ENCODE measurements at regions of chr13 and their contacts with region 1.

Region 1: DNA sequence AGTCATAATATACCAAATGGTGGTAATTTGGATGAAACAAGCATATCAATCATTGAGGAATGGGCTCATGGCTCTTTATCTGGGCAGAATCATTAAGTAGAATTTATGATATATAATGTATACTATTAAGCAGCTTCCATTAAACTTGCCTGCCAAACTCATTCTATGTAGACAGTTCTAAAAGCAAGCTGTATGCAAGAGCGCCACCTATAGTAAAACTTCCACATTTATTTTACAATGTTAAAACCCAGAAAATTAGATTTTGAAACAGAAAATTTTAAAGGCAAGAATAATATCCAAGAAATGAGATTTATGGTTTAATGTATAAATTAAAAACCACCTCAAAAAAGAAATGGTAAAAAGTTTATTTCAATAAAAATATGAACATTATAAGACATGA is 161.5 kb downstream of the MZT1 start:
- DNase-seq: peak; percentile 15
- ATAC-seq: no peak
- H3K4me3 ChIP-seq: no peak overlapping the region
- H3K27ac ChIP-seq: no peak overlapping the region
- H3K4me1 ChIP-seq: no peaks in the 10 kb centered on the region
- H3K27me3 ChIP-seq: no peaks in the 10 kb centered on the region
- CTCF ChIP-seq: peak; percentile 53
- POLR2A ChIP-seq: no peak
- RAD21 ChIP-seq: peak; percentile 54

Region 2: DNA sequence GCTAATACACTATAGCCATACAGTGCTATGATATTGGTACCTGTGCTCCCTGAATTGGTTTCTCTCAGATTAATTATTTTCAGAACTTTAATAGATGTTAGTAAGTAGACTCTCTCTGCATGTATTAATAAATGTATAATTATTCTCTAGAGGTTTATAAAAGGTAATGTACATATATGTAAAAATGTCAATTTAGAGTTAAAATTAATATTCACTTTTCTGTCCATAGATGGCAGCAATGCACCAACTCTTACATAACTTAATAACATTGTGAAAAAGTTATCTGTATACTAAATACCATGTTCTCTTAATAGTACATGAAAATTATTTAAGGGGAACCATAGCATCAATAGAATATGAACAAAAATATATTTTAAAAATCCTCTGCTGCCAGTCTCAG is 1942.7 kb before region 1 on chr13:
- CTCF ChIA-PET with region 1: no interaction called
- POLR2A ChIA-PET with region 1: no interaction called
- dilution Hi-C with region 1: no loop called
- in situ Hi-C with region 1: no loop called
- intact Hi-C with region 1: loop called (anchors 10 kb)
- DNase-seq: peak; percentile 0
- ATAC-seq: no peak
- H3K4me3 ChIP-seq: no peak overlapping the region
- H3K27ac ChIP-seq: no peak overlapping the region
- H3K4me1 ChIP-seq: no peaks in the 10 kb centered on the region
- H3K27me3 ChIP-seq: no peaks in the 10 kb centered on the region
- CTCF ChIP-seq: peak; percentile 41
- POLR2A ChIP-seq: no peak
- RAD21 ChIP-seq: peak; percentile 26; the same call in 1 of the 2 replicates

Region 3: GRCh38 chr13:70960841-70961443 is 1605.0 kb before region 1 on chr13:
- CTCF ChIA-PET with region 1: no interaction called
- POLR2A ChIA-PET with region 1: no interaction called
- dilution Hi-C with region 1: no loop called
- in situ Hi-C with region 1: no loop called
- intact Hi-C with region 1: loop called (anchors 5 kb)
- DNase-seq: peak; percentile 13
- ATAC-seq: no peak
- H3K4me3 ChIP-seq: no peak overlapping the region
- H3K27ac ChIP-seq: no peak overlapping the region
- H3K4me1 ChIP-seq: no peaks in the 10 kb centered on the region
- H3K27me3 ChIP-seq: no peaks in the 10 kb centered on the region
- CTCF ChIP-seq: peak; percentile 51
- POLR2A ChIP-seq: no peak
- RAD21 ChIP-seq: peak; percentile 48

Region 4: GRCh38 chr13:71320452-71320851 is 1245.4 kb before region 1 on chr13:
- CTCF ChIA-PET with region 1: no interaction called
- POLR2A ChIA-PET with region 1: no interaction called
- dilution Hi-C with region 1: no loop called
- in situ Hi-C with region 1: loop called (anchors 25 kb)
- intact Hi-C with region 1: loop called (anchors 10 kb)
- DNase-seq: peak; percentile 41
- ATAC-seq: peak; percentile 60; the same call in 1 of the 2 replicates
- H3K4me3 ChIP-seq: no peak overlapping the region
- H3K27ac ChIP-seq: no peak overlapping the region
- H3K4me1 ChIP-seq: no peaks in the 10 kb centered on the region
- H3K27me3 ChIP-seq: no peaks in the 10 kb centered on the region
- CTCF ChIP-seq: peak; percentile 60
- POLR2A ChIP-seq: no peak
- RAD21 ChIP-seq: peak; percentile 61